MCF 10A (cell line): ENCODE measurements at regions of chr2 and their contacts with region 1.

Region 1: GRCh38 chr2:218216674-218217359 is at the start of gene ARPC2:
- DNase-seq: peak; percentile 90
- H3K4me3 Mint-ChIP-seq: peak within 1 kb of the TSS; percentile 95
- H3K27ac Mint-ChIP-seq: peak within 1 kb of the TSS; percentile 99
- H3K4me1 Mint-ChIP-seq: peaks cover 36% of the 10 kb centered on the region
- H3K27me3 Mint-ChIP-seq: no peaks in the 10 kb centered on the region
- CTCF ChIP-seq: no peak
- total RNA-seq, gene ARPC2: 196 and 284 TPM in 2 replicates

Region 2: DNA sequence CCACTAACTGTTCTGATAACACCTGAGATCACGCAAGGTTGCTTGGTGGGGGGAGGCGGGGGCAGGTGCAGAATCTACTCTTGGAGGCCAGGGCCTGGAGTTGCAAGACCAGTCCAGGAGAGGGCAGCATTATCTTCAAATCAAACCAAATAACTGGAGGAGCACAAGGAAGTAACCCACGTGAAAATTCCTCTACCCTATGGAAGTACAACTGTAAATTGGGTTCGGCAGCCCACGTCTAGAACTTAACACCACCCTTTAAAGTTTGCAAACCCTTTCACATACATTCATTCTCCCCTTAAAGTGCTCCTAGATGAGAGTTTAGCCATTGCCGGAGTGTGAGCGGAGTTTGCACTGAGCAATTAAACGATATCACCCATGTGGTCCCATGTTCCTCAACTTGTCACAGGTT is 30.5 kb before region 1 on chr2:
- CTCF ChIA-PET with region 1: interaction called, 13 read pairs
- POLR2A ChIA-PET with region 1: interaction called, 10 read pairs
- intact Hi-C with region 1: no loop called
- DNase-seq: peak; percentile 82
- H3K4me3 Mint-ChIP-seq: no peak overlapping the region
- H3K27ac Mint-ChIP-seq: no peak overlapping the region
- H3K4me1 Mint-ChIP-seq: peaks cover 6% of the 10 kb centered on the region
- H3K27me3 Mint-ChIP-seq: no peaks in the 10 kb centered on the region
- CTCF ChIP-seq: peak; percentile 84

Region 3: DNA sequence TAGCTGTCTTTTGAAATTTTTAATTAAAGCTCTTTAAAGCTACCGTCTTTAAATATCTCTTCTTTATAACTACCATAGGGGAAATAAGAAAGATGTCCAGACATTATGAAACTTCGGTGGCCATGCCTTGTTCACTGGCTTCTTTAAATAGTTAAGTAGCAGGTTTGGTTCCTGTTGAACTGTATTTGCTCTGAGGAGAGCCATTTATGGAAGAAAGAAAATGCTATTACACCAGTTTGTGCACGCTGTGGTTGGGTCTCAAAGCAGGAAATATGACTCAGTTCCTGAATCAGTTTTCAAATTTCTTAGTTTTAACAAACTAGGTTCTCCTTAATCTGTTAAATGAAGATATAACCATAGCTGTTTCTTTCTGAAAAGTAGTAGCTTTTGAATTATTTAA is 12.4 kb after region 1 on chr2:
- CTCF ChIA-PET with region 1: interaction called, 15 read pairs
- POLR2A ChIA-PET with region 1: interaction called, 171 read pairs
- intact Hi-C with region 1: no loop called
- DNase-seq: peak; percentile 72
- H3K4me3 Mint-ChIP-seq: no peak overlapping the region
- H3K27ac Mint-ChIP-seq: peak overlapping the region; percentile 85
- H3K4me1 Mint-ChIP-seq: peaks cover 26% of the 10 kb centered on the region
- H3K27me3 Mint-ChIP-seq: no peaks in the 10 kb centered on the region
- CTCF ChIP-seq: no peak

Region 4: GRCh38 chr2:218234521-218234920 is 17.7 kb after region 1 on chr2:
- CTCF ChIA-PET with region 1: interaction called, 15 read pairs
- POLR2A ChIA-PET with region 1: interaction called, 171 read pairs
- intact Hi-C with region 1: no loop called
- DNase-seq: no peak
- H3K4me3 Mint-ChIP-seq: no peak overlapping the region
- H3K27ac Mint-ChIP-seq: no peak overlapping the region
- H3K4me1 Mint-ChIP-seq: peaks cover 10% of the 10 kb centered on the region
- H3K27me3 Mint-ChIP-seq: no peaks in the 10 kb centered on the region
- CTCF ChIP-seq: no peak

Region 5: GRCh38 chr2:218286570-218287459 is 70.0 kb after region 1 on chr2:
- CTCF ChIA-PET with region 1: no interaction called
- POLR2A ChIA-PET with region 1: interaction called, 29 read pairs
- intact Hi-C with region 1: no loop called
- DNase-seq: peak; percentile 97
- H3K4me3 Mint-ChIP-seq: peak overlapping the region; percentile 80
- H3K27ac Mint-ChIP-seq: peak overlapping the region; percentile 99
- H3K4me1 Mint-ChIP-seq: peaks cover 57% of the 10 kb centered on the region
- H3K27me3 Mint-ChIP-seq: no peaks in the 10 kb centered on the region
- CTCF ChIP-seq: no peak

Region 6: GRCh38 chr2:218292048-218293014 is 75.5 kb after region 1 on chr2 and contains the start of gene TMBIM1:
- CTCF ChIA-PET with region 1: no interaction called
- POLR2A ChIA-PET with region 1: interaction called, 29 read pairs
- intact Hi-C with region 1: no loop called
- DNase-seq: peak; percentile 77
- H3K4me3 Mint-ChIP-seq: peak within 1 kb of the TSS; percentile 75
- H3K27ac Mint-ChIP-seq: peak within 1 kb of the TSS; percentile 91
- H3K4me1 Mint-ChIP-seq: peaks cover 34% of the 10 kb centered on the region
- H3K27me3 Mint-ChIP-seq: no peaks in the 10 kb centered on the region
- CTCF ChIP-seq: peak; percentile 90
- total RNA-seq, gene TMBIM1: 96.8 and 107 TPM in 2 replicates